ENCODE measurements at regions of chr5 and their contacts with region 1.

Region 1: DNA sequence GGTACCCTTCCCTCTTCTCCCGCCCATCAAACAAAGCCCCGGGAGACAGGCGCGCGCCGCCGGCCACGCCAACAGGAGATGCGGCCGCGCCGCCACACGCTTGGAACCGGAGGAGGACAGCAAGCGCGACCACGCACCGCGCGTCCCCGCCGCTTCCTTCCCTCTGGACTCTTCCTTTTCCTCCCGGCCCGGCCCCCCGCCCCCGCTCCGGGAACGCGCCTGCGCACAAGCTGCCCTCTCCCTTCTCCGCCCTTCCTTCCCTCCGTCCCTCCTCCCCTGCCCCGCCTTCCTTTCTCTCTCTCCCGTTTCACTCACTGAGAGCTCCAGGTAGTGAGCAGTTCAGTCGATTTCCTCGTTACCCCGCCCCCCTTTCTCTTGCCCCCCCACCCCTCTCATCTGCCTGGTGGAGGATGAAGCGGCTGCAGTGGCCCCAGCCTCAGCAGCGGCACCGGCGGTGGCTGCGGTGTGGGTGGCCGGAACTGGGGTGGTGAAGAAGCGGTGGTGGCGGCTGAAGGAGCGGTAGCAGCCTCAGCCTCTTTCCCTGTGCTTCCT is at the start of gene RASA1:
- DNase-seq: peak; percentile 69
- H3K4me3 ChIP-seq: peak within 1 kb of the TSS; percentile 96
- H3K27ac ChIP-seq: peak within 1 kb of the TSS; percentile 84
- H3K27me3 ChIP-seq: no peaks in the 10 kb centered on the region
- CTCF ChIP-seq: no peak
- polyA plus RNA-seq, gene RASA1: 51.5 and 67.3 TPM in 2 replicates

Region 2: GRCh38 chr5:87061046-87061445 is 206.6 kb before region 1 on chr5:
- CTCF ChIA-PET with region 1: no interaction called
- POLR2A ChIA-PET with region 1: no interaction called
- DNase-seq: no peak
- H3K4me3 ChIP-seq: no peak overlapping the region
- H3K27ac ChIP-seq: no peak overlapping the region
- H3K27me3 ChIP-seq: no peaks in the 10 kb centered on the region
- CTCF ChIP-seq: no peak

Region 3: GRCh38 chr5:87195104-87195591 is 72.5 kb before region 1 on chr5:
- CTCF ChIA-PET with region 1: no interaction called
- POLR2A ChIA-PET with region 1: interaction called, 13 read pairs
- DNase-seq: peak; percentile 24
- H3K4me3 ChIP-seq: no peak overlapping the region
- H3K27ac ChIP-seq: peak overlapping the region; percentile 43
- H3K27me3 ChIP-seq: no peaks in the 10 kb centered on the region
- CTCF ChIP-seq: no peak

Measured in AG04450 (cell line).